Right cardiac atrium (tissue), 5 donors: ENCODE measurements at regions of chr2 and their contacts with region 1.

Region 1: DNA sequence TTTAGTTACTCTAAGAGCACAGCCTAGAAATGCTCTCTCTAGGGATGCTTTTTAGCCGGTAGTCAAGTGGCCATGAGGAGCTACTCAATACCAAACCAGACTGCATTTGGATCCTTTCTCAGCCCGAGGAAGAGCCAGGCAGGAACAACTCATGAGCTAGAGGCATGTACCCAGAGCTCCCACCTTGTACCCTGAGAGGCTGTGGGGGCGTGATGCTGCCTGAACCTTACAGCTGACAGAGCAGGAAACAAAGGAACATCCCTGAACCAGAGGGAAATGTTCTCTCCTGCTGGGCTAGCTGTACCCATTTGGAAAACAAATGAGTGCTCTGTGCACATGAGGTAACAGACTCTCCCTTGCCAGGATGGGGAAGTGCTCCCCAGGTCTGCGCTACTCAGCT is 131.6 kb downstream of the OSR1 start:
- DNase-seq: no peak
- ATAC-seq: no peak
- H3K4me3 ChIP-seq: no peak overlapping the region
- H3K27ac ChIP-seq: no peak overlapping the region
- H3K4me1 ChIP-seq: peaks cover 4% of the 10 kb centered on the region
- H3K27me3 ChIP-seq: no peaks in the 10 kb centered on the region

Region 2: DNA sequence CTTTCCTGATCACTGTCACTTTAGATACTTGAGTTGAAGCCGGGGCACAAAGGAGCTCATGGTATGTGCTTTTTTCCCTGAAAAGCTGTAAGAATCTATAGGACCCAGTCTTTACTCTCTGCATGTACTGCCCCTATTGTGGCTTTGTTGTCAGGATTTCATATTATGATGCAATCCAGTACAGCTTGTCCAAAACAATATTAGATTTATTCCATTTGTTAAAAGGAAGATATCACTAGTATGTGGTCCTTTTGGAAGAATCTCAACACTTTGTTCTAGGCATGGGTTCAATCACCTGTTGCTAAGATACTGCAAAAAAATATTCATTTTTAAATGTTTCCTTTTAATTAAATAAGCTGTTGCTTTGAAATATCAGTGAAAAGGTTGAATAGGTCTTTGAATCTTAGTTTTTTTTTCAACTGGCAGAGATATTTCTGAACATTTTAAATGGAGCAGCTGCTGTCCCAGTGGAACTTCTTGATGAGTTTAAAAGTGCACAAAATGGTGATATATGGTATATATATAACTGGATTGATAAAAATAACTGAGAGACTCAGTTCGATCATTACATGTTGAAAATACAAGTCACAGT is 380.9 kb before region 1 on chr2:
- intact Hi-C with region 1: no loop called
- DNase-seq: no peak
- ATAC-seq: peak; percentile 43 to 77
- H3K4me3 ChIP-seq: no peak overlapping the region
- H3K27ac ChIP-seq: no peak overlapping the region
- H3K4me1 ChIP-seq: no peaks in the 10 kb centered on the region
- H3K27me3 ChIP-seq: no peaks in the 10 kb centered on the region

Region 3: GRCh38 chr2:19185086-19185485 is 41.8 kb before region 1 on chr2:
- intact Hi-C with region 1: loop called in 1 of 4 experiments (anchors 1 kb)
- DNase-seq: no peak
- ATAC-seq: no peak
- H3K4me3 ChIP-seq: no peak overlapping the region
- H3K27ac ChIP-seq: no peak overlapping the region
- H3K4me1 ChIP-seq: no peaks in the 10 kb centered on the region
- H3K27me3 ChIP-seq: no peaks in the 10 kb centered on the region

Region 4: GRCh38 chr2:19312949-19313348 is 86.1 kb after region 1 on chr2:
- intact Hi-C with region 1: no loop called
- DNase-seq: peak in 1 of 3 donors; percentile 53
- ATAC-seq: peak in 1 of 2 donors; percentile 60
- H3K4me3 ChIP-seq: no peak overlapping the region
- H3K27ac ChIP-seq: no peak overlapping the region
- H3K4me1 ChIP-seq: no peaks in the 10 kb centered on the region
- H3K27me3 ChIP-seq: no peaks in the 10 kb centered on the region